ENCODE measurements at regions of chr16 and their contacts with region 1.

Region 1: GRCh38 chr16:3129137-3130131 is 5.4 kb upstream of the ZNF213 start:
- DNase-seq: peak; percentile 89
- H3K4me3 Mint-ChIP-seq: peak overlapping the region; percentile 89
- H3K27ac Mint-ChIP-seq: peak overlapping the region; percentile 90
- H3K4me1 Mint-ChIP-seq: peaks cover 71% of the 10 kb centered on the region
- H3K27me3 Mint-ChIP-seq: no peaks in the 10 kb centered on the region

Region 2: DNA sequence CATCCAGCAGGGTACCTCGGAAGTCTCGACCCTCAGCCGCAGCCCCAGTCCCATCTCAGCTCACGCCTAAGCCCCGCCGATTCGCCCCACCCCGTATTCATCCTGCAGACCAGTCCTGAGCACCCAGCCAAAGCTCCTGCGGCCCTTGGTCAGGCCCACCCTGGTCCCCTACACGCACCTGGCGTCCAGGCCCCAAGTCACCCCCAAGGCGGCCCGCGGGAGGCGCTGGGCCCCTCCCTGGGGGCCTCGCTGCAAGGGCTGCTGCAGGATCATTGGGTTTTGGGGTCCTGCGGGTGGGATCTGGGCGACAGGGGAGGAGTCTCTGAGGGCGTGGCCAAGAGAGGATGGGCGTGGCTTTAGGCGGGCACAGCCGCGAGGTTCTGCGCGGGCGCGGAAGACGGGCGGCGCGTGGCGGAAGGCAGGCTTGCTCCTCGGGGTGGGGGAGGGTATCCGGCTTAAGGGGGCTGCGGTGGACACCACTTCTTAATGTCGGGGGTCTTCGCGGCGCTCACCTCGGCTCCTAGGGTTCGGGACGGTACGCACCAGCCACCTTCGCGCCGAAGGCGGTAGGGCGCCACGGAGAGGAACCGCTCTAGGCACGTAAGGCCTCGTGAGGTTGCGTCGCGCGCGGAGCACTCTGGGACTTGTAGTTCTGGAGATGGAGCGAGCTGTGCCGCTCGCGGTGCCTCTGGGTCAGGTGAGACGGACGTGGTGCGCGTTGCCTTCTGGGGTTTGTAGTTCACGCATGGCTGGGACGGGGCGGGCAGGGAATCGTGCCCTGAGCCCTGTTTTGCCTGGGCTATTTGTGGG is 105.6 kb before region 1 on chr16 and contains the starts of genes HCFC1R1 and THOC6:
- CTCF ChIA-PET with region 1: interaction called, 105 read pairs
- DNase-seq: peak; percentile 98
- H3K4me3 Mint-ChIP-seq: peak within 1 kb of the TSS; percentile 90
- H3K27ac Mint-ChIP-seq: peak within 1 kb of the TSS; percentile 95
- H3K4me1 Mint-ChIP-seq: peaks cover 71% of the 10 kb centered on the region
- H3K27me3 Mint-ChIP-seq: peaks cover 35% of the 10 kb centered on the region

Region 3: GRCh38 chr16:3065069-3065741 is 64.2 kb before region 1 on chr16 and contains the start of gene IL32:
- CTCF ChIA-PET with region 1: interaction called, 131 read pairs
- DNase-seq: peak; percentile 81
- H3K4me3 Mint-ChIP-seq: peak within 1 kb of the TSS; percentile 95
- H3K27ac Mint-ChIP-seq: peak within 1 kb of the TSS; percentile 94
- H3K4me1 Mint-ChIP-seq: peaks cover 78% of the 10 kb centered on the region
- H3K27me3 Mint-ChIP-seq: no peaks in the 10 kb centered on the region

Region 4: DNA sequence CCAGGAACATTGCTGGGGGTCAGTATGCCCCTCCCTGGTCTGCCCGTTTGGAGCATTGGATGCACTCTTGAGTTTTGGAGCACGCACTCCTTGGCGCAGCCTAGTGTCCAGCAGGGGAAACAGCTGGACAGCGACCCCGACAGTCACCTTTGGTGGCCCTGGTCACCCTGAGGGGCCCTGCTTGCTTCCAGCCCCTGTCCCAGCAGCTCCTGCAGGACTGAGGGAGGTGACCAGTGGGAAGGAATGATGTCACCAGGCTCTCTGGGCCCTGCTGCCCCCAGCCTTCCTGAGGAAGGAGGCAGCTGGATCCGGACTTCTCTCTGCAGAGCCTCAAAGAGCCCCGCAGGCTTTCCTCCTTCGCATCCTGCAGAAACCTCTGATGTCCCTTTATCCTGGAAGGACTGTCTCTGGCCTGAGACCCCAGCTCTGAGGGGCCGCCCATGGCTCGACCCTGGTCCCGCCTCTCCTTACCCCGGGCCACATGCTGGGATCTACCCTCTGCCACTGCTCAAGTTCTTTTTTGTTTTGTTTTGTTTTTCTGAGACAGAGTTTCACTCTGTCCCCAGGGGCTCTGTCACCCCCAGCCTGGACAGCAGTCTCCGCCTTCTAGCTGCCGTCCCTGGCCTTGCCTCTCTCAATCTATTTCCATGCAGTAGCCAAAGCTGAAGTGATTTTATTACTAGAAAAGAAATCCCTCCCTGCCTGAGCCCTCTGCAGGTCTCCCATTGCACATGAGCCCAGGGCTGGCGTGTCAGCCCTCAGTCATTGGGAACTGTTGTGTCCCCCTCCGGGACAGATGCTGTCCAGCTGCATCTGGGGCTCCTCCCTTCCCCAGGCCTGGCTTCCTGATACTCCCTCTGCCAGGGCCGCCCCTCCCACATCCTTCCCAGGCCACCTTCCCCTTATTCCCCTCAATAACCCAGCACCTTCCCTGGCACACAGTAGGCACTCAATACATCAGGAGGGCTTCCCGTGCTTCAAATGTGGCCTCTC is 41.9 kb before region 1 on chr16:
- CTCF ChIA-PET with region 1: interaction called, 19 read pairs
- DNase-seq: no peak
- H3K4me3 Mint-ChIP-seq: no peak overlapping the region
- H3K27ac Mint-ChIP-seq: peak overlapping the region; percentile 77
- H3K4me1 Mint-ChIP-seq: peaks cover 64% of the 10 kb centered on the region
- H3K27me3 Mint-ChIP-seq: peaks cover 4% of the 10 kb centered on the region

Region 5: DNA sequence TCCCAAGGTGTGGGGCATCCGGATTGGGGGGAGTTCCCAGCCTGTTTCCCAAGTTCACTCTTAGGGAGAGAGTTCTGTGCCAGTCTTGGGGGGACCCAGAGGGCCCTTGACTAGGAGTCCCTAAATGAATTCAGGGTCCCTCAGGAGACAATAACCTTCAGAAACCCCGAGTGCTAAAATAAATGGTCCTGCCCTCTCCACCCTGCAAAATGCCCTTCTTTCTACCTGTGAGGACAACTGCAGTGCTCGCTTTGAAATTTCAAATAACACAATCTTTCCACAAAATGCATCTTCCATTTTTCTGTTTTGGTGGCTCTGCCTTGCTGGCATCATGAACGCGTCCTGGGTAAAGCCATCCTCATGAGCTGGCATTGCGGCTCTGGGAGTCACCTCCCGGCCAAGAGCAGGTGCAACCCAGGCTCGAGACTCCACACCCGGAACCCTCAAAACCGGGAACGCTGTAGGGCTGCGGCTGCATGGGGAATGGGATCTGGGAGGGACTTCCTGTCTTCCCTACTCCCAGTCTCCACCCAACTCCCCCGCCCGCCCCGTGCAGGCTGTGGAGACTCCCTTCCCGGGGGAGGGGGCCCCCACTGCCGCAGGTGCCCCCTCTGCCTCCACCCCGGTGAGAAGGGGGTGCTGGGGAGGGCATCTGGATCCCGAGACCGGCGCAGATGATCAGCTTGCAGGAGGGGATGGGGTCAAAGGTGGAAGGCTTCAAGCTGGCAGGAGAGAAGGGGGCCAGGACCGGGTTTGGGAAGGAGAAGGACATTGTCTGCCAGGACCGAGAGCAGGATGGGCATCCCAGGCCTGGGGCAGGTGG is 17.2 kb before region 1 on chr16 and contains the start of gene ZNF205:
- CTCF ChIA-PET with region 1: interaction called, 14 read pairs
- DNase-seq: no peak
- H3K4me3 Mint-ChIP-seq: no peak within 1 kb of the TSS
- H3K27ac Mint-ChIP-seq: no peak within 1 kb of the TSS
- H3K4me1 Mint-ChIP-seq: peaks cover 8% of the 10 kb centered on the region
- H3K27me3 Mint-ChIP-seq: peaks cover 75% of the 10 kb centered on the region

Region 6: DNA sequence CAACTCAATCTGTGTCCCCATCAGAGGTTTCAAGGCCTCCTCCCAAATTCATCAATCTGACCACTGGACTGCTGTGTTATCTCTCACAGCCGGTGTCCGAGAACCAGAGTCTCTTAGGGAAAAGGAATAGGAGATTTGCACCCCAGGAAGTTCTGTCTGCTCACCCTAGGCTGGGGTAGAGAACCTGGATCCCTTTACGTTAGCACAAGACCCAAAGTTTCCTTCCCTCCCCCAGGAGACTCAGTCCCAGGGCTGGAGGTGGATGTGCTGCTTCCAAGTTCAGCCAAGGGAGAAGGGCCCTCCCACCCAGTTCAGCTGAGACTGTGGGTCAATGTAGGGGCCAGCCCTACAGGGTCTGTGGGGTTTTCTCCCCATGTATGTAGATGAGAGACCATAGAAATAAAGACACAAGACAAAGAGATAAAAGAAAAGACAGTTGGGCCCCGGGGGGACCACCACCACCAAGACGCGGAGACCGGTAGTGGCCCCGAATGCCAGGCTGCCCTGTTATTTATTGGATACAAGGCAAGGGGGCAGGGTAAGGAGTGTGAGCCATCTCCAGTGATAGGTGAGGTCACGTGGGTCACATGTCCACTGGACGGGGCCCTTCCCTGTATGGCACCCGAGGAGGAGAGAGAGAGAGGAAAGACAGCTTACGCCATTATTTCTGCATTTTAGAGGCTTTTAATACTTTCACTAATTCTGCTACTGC is 35.8 kb after region 1 on chr16:
- CTCF ChIA-PET with region 1: interaction called, 22 read pairs
- DNase-seq: no peak
- H3K4me3 Mint-ChIP-seq: no peak overlapping the region
- H3K27ac Mint-ChIP-seq: no peak overlapping the region
- H3K4me1 Mint-ChIP-seq: peaks cover 36% of the 10 kb centered on the region
- H3K27me3 Mint-ChIP-seq: peaks cover 50% of the 10 kb centered on the region

Region 7: GRCh38 chr16:3234543-3235541 is 105.4 kb after region 1 on chr16 and contains the start of gene ZNF200:
- CTCF ChIA-PET with region 1: no interaction called
- DNase-seq: peak; percentile 97
- H3K4me3 Mint-ChIP-seq: peak within 1 kb of the TSS; percentile 91
- H3K27ac Mint-ChIP-seq: peak within 1 kb of the TSS; percentile 95
- H3K4me1 Mint-ChIP-seq: peaks cover 43% of the 10 kb centered on the region
- H3K27me3 Mint-ChIP-seq: peaks cover 9% of the 10 kb centered on the region